ENCODE measurements at regions of chr19 and their contacts with region 1.

Region 1: GRCh38 chr19:57410877-57411671 is at the start of gene ZNF17:
- DNase-seq: peak; percentile 72 to 95 (median 88)
- ATAC-seq: peak; percentile 100
- H3K4me3 ChIP-seq: peak within 1 kb of the TSS; percentile 80
- H3K4me3 Mint-ChIP-seq: peak within 1 kb of the TSS; percentile 85 to 97 (median 96)
- H3K27ac ChIP-seq: peak within 1 kb of the TSS; percentile 80
- H3K27ac Mint-ChIP-seq: peak within 1 kb of the TSS; percentile 78 to 96 (median 92)
- H3K4me1 ChIP-seq: peaks cover 3 to 8% of the 10 kb centered on the region in 2 donors
- H3K4me1 Mint-ChIP-seq: peaks cover 20 to 46% (median 34%) of the 10 kb centered on the region in 7 donors
- H3K27me3 ChIP-seq: no peaks in the 10 kb centered on the region
- H3K27me3 Mint-ChIP-seq: no peaks in the 10 kb centered on the region
- total RNA-seq, gene ZNF17: 9.3 to 27.8 (median 17.2) TPM

Region 2: DNA sequence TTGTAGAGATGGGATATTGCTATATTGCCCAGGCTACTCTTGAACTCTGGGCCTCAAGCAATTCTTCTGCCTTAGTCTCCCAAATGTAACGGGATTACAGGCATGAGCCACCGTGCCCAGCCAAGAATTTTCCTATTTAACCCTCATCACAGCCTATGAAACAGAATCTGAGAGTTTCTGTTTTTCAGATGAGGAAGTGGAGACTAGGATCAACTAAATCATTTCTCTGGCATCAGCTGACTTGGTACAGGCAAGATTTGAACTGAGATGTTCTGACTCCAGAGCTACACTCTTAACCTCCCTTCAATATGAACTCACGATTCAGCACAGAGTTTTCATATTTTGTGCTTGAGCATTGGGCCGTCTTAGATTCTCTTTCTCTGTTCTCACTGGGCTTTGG is 122.7 kb before region 1 on chr19:
- CTCF ChIA-PET with region 1: no interaction called
- POLR2A ChIA-PET with region 1: no interaction called
- intact Hi-C with region 1: no loop called
- DNase-seq: no peak
- ATAC-seq: no peak
- H3K4me3 ChIP-seq: no peak overlapping the region
- H3K4me3 Mint-ChIP-seq: peak overlapping the region in 1 of 10 donors; percentile 54
- H3K27ac ChIP-seq: no peak overlapping the region
- H3K27ac Mint-ChIP-seq: peak overlapping the region in 1 of 9 donors; percentile 5
- H3K4me1 ChIP-seq: no peaks in the 10 kb centered on the region
- H3K4me1 Mint-ChIP-seq: peaks cover 10 to 28% (median 18%) of the 10 kb centered on the region in 7 donors
- H3K27me3 ChIP-seq: no peaks in the 10 kb centered on the region
- H3K27me3 Mint-ChIP-seq: no peaks in the 10 kb centered on the region

Region 3: DNA sequence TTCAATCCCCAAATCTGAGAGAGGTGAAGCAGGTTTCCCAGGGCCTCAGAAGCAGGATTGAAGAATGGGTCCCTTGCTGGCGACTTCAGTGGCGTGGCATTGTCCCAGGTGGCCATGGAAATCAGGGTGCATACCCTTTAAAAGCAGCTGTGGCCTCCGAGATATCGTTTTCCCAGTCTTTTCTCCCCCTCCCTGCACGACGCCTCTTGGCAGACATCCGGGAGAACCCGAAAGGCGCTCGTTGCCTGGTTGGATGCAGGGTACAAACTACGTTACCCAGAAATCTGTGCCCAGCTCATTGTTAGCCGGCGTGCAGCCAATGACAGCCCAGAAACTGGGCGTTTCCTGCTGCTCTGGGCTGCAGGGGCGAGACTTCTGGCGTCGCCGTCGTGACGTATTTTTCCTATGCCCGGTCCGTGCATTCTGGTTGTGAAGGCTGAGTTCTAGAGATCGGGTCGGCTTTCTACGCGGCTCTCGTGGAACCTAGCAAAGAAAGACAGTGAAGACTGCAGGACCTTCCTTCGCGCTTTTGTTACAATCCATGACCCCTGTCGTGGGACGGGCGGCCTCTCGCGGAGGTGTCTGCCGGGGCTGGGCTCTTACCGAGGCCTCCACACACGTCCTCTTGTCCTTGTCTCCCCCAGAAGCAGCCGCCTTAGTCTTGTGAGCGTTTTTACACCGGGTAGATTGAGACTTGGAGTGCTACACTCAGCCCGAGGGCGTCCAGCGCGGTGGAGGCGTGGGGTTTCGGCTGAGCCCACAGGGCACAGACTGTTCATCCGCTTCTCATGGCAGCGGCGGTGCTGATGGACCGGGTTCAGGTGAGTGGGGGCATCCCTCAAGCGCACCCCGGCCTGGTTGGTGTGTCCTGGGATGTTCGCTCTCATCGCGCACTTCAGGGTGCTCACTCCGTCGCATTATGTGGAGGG is 59.9 kb before region 1 on chr19 and contains the start of gene ZNF304:
- CTCF ChIA-PET with region 1: no interaction called
- POLR2A ChIA-PET with region 1: interaction called, 3 read pairs
- intact Hi-C with region 1: loop called (anchors 1 kb)
- DNase-seq: peak; percentile 51 to 85 (median 76)
- ATAC-seq: peak; percentile 100
- H3K4me3 ChIP-seq: peak within 1 kb of the TSS; percentile 83
- H3K4me3 Mint-ChIP-seq: peak within 1 kb of the TSS; percentile 93 to 97 (median 96)
- H3K27ac ChIP-seq: peak within 1 kb of the TSS; percentile 77
- H3K27ac Mint-ChIP-seq: peak within 1 kb of the TSS; percentile 80 to 96 (median 92)
- H3K4me1 ChIP-seq: peaks cover 11% of the 10 kb centered on the region in 2 donors
- H3K4me1 Mint-ChIP-seq: peaks cover 28 to 43% (median 32%) of the 10 kb centered on the region in 7 donors
- H3K27me3 ChIP-seq: no peaks in the 10 kb centered on the region
- H3K27me3 Mint-ChIP-seq: peaks cover 0 to 11% (median 7%) of the 10 kb centered on the region in 5 donors
- total RNA-seq, gene ZNF304: 6.0 to 12.5 (median 9.0) TPM

Region 4: GRCh38 chr19:57382806-57383488 is 28.1 kb before region 1 on chr19:
- CTCF ChIA-PET with region 1: no interaction called
- POLR2A ChIA-PET with region 1: no interaction called
- intact Hi-C with region 1: no loop called
- DNase-seq: no peak
- ATAC-seq: no peak
- H3K4me3 ChIP-seq: no peak overlapping the region
- H3K4me3 Mint-ChIP-seq: no peak overlapping the region
- H3K27ac ChIP-seq: no peak overlapping the region
- H3K27ac Mint-ChIP-seq: no peak overlapping the region
- H3K4me1 ChIP-seq: no peaks in the 10 kb centered on the region
- H3K4me1 Mint-ChIP-seq: no peaks in the 10 kb centered on the region
- H3K27me3 ChIP-seq: no peaks in the 10 kb centered on the region
- H3K27me3 Mint-ChIP-seq: peaks cover 0 to 3% (median 0%) of the 10 kb centered on the region in 5 donors

Region 5: DNA sequence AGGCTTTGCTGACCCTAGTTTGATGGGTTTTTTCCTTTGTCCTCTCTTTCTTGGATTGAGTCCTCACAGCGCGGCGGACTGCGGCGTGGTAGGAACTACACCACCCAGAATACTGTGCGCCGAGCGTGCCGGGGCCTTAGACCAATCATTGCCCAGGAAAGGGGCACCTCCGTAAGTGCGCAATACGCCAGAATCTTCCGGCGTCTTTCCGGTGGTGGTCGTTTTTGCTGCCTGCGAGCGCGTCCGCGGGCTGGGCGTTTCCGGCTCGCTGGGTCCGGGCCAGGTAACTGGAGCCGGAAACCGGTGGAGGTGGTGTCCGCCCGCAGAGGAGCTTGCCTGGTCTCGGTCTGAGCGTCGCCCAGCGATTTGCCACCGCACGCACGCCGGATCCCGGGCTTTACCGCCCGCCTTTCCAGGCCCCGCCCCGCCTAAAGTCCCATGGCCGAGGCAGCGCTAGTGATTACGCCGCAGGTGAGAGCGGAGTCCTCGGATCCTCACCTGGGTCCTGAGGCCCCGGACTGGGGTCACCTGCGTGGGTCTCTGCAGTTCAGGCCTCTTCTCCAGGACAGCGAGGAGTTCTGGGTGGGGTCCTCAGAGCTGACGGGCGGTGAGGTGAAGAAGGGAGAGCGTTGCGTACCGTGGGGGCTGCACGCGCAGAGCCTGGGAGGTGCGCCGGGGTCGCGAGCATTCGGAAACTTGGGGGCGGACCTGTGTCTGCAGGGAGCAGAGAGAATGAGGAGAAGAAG is 116.2 kb after region 1 on chr19 and contains the start of gene ZNF549:
- CTCF ChIA-PET with region 1: no interaction called
- POLR2A ChIA-PET with region 1: no interaction called
- intact Hi-C with region 1: loop called (anchors 1 kb)
- DNase-seq: peak; percentile 65 to 90 (median 88)
- ATAC-seq: peak; percentile 99
- H3K4me3 ChIP-seq: peak within 1 kb of the TSS; percentile 98
- H3K4me3 Mint-ChIP-seq: peak within 1 kb of the TSS; percentile 89 to 98 (median 96)
- H3K27ac ChIP-seq: peak within 1 kb of the TSS; percentile 94
- H3K27ac Mint-ChIP-seq: peak within 1 kb of the TSS; percentile 80 to 98 (median 95)
- H3K4me1 ChIP-seq: peaks cover 14 to 18% of the 10 kb centered on the region in 2 donors
- H3K4me1 Mint-ChIP-seq: peaks cover 15 to 36% (median 32%) of the 10 kb centered on the region in 7 donors
- H3K27me3 ChIP-seq: no peaks in the 10 kb centered on the region
- H3K27me3 Mint-ChIP-seq: peaks cover 0 to 4% (median 0%) of the 10 kb centered on the region in 5 donors
- total RNA-seq, gene ZNF549: 6.9 to 24.8 (median 11.3) TPM

Region 6: DNA sequence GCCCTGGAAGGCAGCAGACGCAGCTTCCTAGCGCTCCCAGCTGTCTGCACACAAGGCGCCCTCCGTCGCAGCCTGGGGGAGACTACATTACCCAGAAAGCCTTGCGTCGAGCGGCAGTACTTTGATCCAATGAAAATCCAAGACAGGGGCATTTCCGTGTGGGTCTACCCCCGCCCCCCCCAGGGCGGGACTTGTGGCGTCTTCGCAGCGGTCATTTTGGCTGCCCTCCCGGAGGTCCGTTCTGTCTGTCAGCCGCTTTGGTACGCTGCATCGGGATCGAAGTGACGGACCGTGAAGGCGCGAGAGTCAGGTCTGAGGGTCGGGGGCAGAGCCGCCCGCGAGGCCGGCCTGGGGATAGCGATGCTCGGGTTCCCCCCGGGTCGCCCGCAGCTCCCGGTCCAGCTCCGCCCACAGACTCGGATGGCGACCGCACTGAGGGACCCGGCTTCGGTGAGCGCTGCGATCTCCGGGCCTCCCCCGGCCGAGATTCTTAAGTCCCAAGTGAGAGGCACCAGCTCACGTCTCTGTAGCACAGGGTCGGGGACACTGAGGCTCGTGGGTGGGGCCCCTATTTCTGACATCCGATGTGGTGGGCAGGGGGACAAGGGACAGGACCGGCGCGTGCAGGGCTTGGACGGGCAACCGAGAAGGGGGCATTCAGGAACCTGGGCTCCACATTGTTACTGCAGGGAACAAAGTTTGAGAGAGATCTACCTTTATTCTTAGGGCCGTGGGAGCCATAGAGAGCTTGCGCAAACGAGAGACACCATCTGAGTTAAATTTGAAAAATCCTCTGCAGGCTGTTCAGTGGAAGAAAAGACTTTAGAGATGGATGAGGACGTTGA is 222.1 kb after region 1 on chr19 and contains the start of gene ZNF211:
- CTCF ChIA-PET with region 1: interaction called, 3 read pairs
- POLR2A ChIA-PET with region 1: interaction called, 3 read pairs
- intact Hi-C with region 1: loop called (anchors 1 to 2 kb)
- DNase-seq: peak; percentile 74 to 89 (median 86)
- ATAC-seq: peak; percentile 100
- H3K4me3 ChIP-seq: peak within 1 kb of the TSS; percentile 87
- H3K4me3 Mint-ChIP-seq: peak within 1 kb of the TSS; percentile 87 to 97 (median 94)
- H3K27ac ChIP-seq: peak within 1 kb of the TSS; percentile 90
- H3K27ac Mint-ChIP-seq: peak within 1 kb of the TSS; percentile 81 to 97 (median 89)
- H3K4me1 ChIP-seq: peaks cover 3 to 13% of the 10 kb centered on the region in 2 donors
- H3K4me1 Mint-ChIP-seq: peaks cover 21 to 36% (median 28%) of the 10 kb centered on the region in 7 donors
- H3K27me3 ChIP-seq: no peaks in the 10 kb centered on the region
- H3K27me3 Mint-ChIP-seq: no peaks in the 10 kb centered on the region
- total RNA-seq, gene ZNF211: 18.0 to 56.7 (median 33.7) TPM

Region 7: DNA sequence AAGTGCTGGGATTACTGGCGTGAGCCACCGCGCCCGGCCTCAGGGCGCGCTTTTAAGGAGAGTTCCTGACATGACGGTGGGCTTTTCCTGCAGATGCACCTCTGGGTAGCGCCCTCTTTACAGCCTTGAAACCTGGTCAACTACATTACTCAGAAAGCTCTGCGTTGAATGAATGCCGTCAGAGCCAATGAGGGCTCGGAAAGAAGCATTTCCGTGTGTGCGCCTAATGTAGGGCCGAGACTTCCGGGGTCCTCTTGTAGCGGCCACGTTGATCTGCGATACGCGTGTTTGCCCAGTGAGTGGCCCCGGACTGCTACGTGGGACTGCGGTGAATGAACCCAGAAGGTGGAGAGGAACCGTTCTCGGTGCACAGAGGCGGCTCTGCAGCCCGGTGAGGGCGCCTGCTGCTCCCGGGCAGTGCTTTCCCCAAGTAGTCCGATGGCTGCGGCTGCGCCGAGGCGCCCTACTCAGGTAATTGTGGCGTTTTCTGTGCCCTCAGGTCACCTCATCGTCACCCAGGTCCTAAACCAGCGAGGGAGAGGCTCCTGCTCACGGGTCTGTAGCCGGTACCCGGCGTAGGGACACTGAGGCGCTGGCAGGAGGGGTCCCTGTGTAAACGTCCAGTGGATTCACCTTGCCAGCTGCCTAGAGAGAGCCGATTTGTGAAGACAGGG is 408.5 kb after region 1 on chr19:
- CTCF ChIA-PET with region 1: no interaction called
- POLR2A ChIA-PET with region 1: interaction called, 4 read pairs
- intact Hi-C with region 1: loop called in 1 of 2 experiments (anchors 1 kb)
- DNase-seq: peak; percentile 45 to 85 (median 79)
- ATAC-seq: peak; percentile 89
- H3K4me3 ChIP-seq: peak overlapping the region; percentile 98
- H3K4me3 Mint-ChIP-seq: peak overlapping the region; percentile 95 to 99 (median 98)
- H3K27ac ChIP-seq: peak overlapping the region; percentile 92
- H3K27ac Mint-ChIP-seq: peak overlapping the region; percentile 88 to 99 (median 95)
- H3K4me1 ChIP-seq: peaks cover 0 to 13% of the 10 kb centered on the region in 2 donors
- H3K4me1 Mint-ChIP-seq: peaks cover 38 to 73% (median 67%) of the 10 kb centered on the region in 7 donors
- H3K27me3 ChIP-seq: no peaks in the 10 kb centered on the region
- H3K27me3 Mint-ChIP-seq: no peaks in the 10 kb centered on the region

Region 8: DNA sequence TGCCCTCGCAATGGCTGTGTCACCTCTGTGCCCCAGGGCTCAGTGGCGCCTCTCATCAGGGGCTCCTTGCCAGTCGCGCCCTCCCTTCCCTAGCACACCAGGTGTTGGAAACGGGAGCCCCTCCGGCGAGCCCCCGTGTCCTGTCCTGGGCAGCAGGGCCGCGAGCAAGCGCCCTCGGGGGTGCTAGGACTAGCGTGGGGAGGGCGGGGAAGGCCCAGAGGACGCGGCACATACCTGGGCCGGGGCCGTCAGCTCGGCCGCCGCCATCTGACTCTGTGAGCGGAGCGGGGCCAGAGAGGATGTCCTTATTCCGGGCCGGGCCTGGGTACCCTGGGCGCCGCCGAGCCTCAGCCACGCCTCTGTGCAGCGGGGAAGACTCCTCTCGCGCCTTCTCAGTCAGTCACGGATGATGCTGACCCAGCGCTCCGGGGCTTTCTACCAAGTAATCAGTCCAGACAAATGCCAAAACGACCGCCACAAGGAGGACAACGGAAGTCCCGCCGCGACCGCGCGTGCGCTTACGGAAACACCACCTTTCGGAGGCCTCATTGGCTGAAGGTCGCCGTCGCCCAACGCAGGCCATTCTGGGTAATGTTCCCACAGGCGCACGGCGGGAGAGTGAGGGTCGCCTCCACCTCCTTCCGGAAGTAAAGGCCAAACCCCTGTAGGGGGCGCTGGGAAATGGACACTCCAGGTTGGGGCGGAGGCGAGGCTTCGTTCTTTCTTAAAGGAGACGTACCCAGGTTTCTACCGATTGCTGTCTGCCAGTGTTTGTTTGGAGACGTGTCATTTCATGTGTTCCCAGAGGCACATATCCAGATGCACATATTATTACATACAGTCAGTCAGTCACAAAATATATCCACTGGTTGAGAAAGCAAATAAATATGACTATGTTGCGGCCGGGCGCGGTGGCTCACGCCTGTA is 536.4 kb after region 1 on chr19 and contains the start of gene ZNF256:
- CTCF ChIA-PET with region 1: no interaction called
- POLR2A ChIA-PET with region 1: no interaction called
- intact Hi-C with region 1: loop called in 1 of 2 experiments (anchors 1 kb)
- DNase-seq: peak; percentile 55 to 85 (median 77)
- ATAC-seq: peak; percentile 97
- H3K4me3 ChIP-seq: peak within 1 kb of the TSS; percentile 71
- H3K4me3 Mint-ChIP-seq: peak within 1 kb of the TSS; percentile 89 to 97 (median 95)
- H3K27ac ChIP-seq: peak within 1 kb of the TSS; percentile 80
- H3K27ac Mint-ChIP-seq: peak within 1 kb of the TSS; percentile 83 to 97 (median 92)
- H3K4me1 ChIP-seq: peaks cover 6 to 9% of the 10 kb centered on the region in 2 donors
- H3K4me1 Mint-ChIP-seq: peaks cover 10 to 28% (median 21%) of the 10 kb centered on the region in 7 donors
- H3K27me3 ChIP-seq: no peaks in the 10 kb centered on the region
- H3K27me3 Mint-ChIP-seq: peaks cover 0 to 4% (median 0%) of the 10 kb centered on the region in 5 donors
- total RNA-seq, gene ZNF256: 5.2 to 13.8 (median 11.8) TPM